ENCODE measurements at regions of chr12 and their contacts with region 1.

Region 1: DNA sequence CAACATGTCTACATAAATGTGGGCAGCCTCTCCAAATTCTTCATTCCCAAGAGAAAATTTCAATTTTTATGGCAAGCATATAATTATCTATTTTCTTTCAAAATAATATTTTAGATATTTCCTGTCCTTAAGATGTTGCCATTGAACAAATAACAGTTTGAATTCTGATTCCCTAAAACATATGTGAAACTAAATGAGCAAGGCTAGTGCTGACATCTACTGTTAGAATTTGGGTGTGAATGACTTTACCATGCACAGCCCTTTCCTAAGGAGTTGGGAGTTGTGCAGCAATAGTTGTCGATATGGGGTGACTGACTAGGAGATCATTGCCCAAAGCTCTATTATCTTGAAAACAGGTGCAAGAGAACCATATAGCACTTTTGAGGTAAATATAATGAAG is 108.2 kb upstream of the SLC38A4 start:
- DNase-seq: no peak
- H3K4me3 ChIP-seq: no peak overlapping the region
- H3K27ac ChIP-seq: no peak overlapping the region
- H3K4me1 ChIP-seq: peaks cover 0 to 20% (median 0%) of the 10 kb centered on the region in 3 donors
- H3K27me3 ChIP-seq: no peaks in the 10 kb centered on the region
- CTCF ChIP-seq: peak in 5 of 6 experiments; percentile 31 to 71 (median 56)
- POLR2A ChIP-seq: no peak

Region 2: GRCh38 chr12:46153268-46153872 is 780.6 kb before region 1 on chr12:
- intact Hi-C with region 1: loop called (anchors 10 kb)
- DNase-seq: no peak
- H3K4me3 ChIP-seq: no peak overlapping the region
- H3K27ac ChIP-seq: peak overlapping the region in 1 of 4 donors; percentile 0
- H3K4me1 ChIP-seq: peaks cover 3 to 42% (median 12%) of the 10 kb centered on the region in 3 donors
- H3K27me3 ChIP-seq: no peaks in the 10 kb centered on the region
- CTCF ChIP-seq: peak; percentile 20 to 65 (median 52)
- POLR2A ChIP-seq: no peak

Region 3: GRCh38 chr12:46675736-46676135 is 258.2 kb before region 1 on chr12:
- intact Hi-C with region 1: loop called (anchors 5 kb)
- DNase-seq: no peak
- H3K4me3 ChIP-seq: peak overlapping the region in 3 of 4 donors; percentile 12 to 49 (median 21)
- H3K27ac ChIP-seq: peak overlapping the region; percentile 70 to 89 (median 86)
- H3K4me1 ChIP-seq: peaks cover 12 to 56% (median 17%) of the 10 kb centered on the region in 3 donors
- H3K27me3 ChIP-seq: no peaks in the 10 kb centered on the region
- CTCF ChIP-seq: peak; percentile 46 to 86 (median 73)
- POLR2A ChIP-seq: no peak